Activated B cell treated with CpG ODN at 0.5 μM for 24 hours (primary cell): ENCODE measurements at regions of chr15 and their contacts with region 1.

Region 1: GRCh38 chr15:31326156-31326732 is 391 bp upstream of the KLF13 start:
- DNase-seq: peak; percentile 100
- ATAC-seq: peak; percentile 73
- H3K4me3 Mint-ChIP-seq: peak overlapping the region; percentile 93
- H3K27ac Mint-ChIP-seq: peak overlapping the region; percentile 86
- H3K4me1 Mint-ChIP-seq: peaks cover 62% of the 10 kb centered on the region
- H3K27me3 Mint-ChIP-seq: no peaks in the 10 kb centered on the region
- CTCF ChIP-seq: no peak

Region 2: GRCh38 chr15:31215490-31216214 is 110.6 kb before region 1 on chr15:
- CTCF ChIA-PET with region 1: interaction called, 47 read pairs
- POLR2A ChIA-PET with region 1: interaction called, 134 read pairs
- intact Hi-C with region 1: loop called (anchors 1 kb)
- DNase-seq: peak; percentile 86
- ATAC-seq: peak; percentile 80
- H3K4me3 Mint-ChIP-seq: peak overlapping the region; percentile 88
- H3K27ac Mint-ChIP-seq: peak overlapping the region; percentile 93
- H3K4me1 Mint-ChIP-seq: peaks cover 44% of the 10 kb centered on the region
- H3K27me3 Mint-ChIP-seq: no peaks in the 10 kb centered on the region
- CTCF ChIP-seq: no peak

Region 3: GRCh38 chr15:31265871-31266711 is 60.2 kb before region 1 on chr15:
- CTCF ChIA-PET with region 1: interaction called, 20 read pairs
- POLR2A ChIA-PET with region 1: interaction called, 406 read pairs
- intact Hi-C with region 1: loop called (anchors 1 kb)
- DNase-seq: peak; percentile 62
- ATAC-seq: peak; percentile 59
- H3K4me3 Mint-ChIP-seq: peak overlapping the region; percentile 79
- H3K27ac Mint-ChIP-seq: peak overlapping the region; percentile 93
- H3K4me1 Mint-ChIP-seq: peaks cover 91% of the 10 kb centered on the region
- H3K27me3 Mint-ChIP-seq: no peaks in the 10 kb centered on the region
- CTCF ChIP-seq: no peak

Region 4: GRCh38 chr15:31352911-31353811 is 26.9 kb after region 1 on chr15:
- CTCF ChIA-PET with region 1: interaction called, 3 read pairs
- POLR2A ChIA-PET with region 1: interaction called, 94 read pairs
- intact Hi-C with region 1: loop called (anchors 1 kb)
- DNase-seq: peak; percentile 50
- ATAC-seq: peak; percentile 71
- H3K4me3 Mint-ChIP-seq: peak overlapping the region; percentile 68
- H3K27ac Mint-ChIP-seq: peak overlapping the region; percentile 84
- H3K4me1 Mint-ChIP-seq: peaks cover 100% of the 10 kb centered on the region
- H3K27me3 Mint-ChIP-seq: no peaks in the 10 kb centered on the region
- CTCF ChIP-seq: no peak

Region 5: GRCh38 chr15:31442203-31443111 is 116.2 kb after region 1 on chr15:
- CTCF ChIA-PET with region 1: interaction called, 5 read pairs
- POLR2A ChIA-PET with region 1: interaction called, 125 read pairs
- intact Hi-C with region 1: no loop called
- DNase-seq: no peak
- ATAC-seq: no peak
- H3K4me3 Mint-ChIP-seq: peak overlapping the region; percentile 41
- H3K27ac Mint-ChIP-seq: peak overlapping the region; percentile 20
- H3K4me1 Mint-ChIP-seq: peaks cover 59% of the 10 kb centered on the region
- H3K27me3 Mint-ChIP-seq: no peaks in the 10 kb centered on the region
- CTCF ChIP-seq: no peak

Region 6: DNA sequence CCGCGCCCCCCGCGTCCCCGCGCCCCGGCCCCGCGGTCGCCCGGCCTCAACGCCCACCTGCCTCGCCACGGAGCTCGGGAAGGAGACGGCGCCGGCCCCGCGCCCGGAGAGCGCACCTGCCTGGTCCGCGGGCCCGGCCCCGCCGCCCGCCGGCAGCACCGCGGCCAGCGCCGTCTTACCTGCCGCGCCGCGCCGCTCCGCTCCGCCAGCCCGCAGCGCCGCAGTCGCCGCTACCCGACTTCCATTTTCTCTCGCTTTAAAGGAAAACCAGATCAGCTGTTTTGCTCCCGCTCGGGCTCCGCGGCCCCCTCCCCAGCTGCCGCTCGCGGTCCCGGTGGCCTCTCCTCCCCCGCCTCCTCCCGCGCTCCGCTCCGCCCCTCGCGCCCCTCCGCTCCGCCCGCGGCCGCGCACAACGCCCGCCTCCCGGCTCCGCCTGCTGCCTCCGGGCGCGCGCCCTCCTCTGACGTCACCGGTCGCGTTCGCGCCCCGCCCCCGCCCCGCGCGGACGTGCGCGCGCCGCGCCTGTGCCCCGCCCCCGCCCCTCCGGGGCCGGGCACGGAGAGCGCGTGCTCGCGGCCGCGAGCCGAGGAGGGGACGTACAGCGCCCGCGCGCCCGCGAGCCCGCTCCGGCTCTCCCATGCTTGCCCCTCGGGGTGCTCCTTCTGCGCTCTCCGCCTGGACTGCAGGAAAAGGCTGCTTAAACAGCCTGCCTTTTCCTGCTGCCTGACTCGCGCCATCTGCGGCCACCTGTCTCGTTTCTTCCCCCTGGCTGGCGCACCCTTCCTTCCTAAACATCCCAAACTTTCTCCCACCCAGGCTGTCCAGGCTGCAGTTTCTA is 544.3 kb after region 1 on chr15:
- CTCF ChIA-PET with region 1: no interaction called
- POLR2A ChIA-PET with region 1: no interaction called
- intact Hi-C with region 1: loop called (anchors 5 kb)
- DNase-seq: peak; percentile 89
- ATAC-seq: peak; percentile 90
- H3K4me3 Mint-ChIP-seq: peak within 1 kb of the TSS; percentile 87
- H3K27ac Mint-ChIP-seq: peak within 1 kb of the TSS; percentile 72
- H3K4me1 Mint-ChIP-seq: peaks cover 10% of the 10 kb centered on the region
- H3K27me3 Mint-ChIP-seq: peaks cover 13% of the 10 kb centered on the region
- CTCF ChIP-seq: no peak